A549 (cell line): ENCODE measurements at regions of chr17 and their contacts with region 1.

Region 1: DNA sequence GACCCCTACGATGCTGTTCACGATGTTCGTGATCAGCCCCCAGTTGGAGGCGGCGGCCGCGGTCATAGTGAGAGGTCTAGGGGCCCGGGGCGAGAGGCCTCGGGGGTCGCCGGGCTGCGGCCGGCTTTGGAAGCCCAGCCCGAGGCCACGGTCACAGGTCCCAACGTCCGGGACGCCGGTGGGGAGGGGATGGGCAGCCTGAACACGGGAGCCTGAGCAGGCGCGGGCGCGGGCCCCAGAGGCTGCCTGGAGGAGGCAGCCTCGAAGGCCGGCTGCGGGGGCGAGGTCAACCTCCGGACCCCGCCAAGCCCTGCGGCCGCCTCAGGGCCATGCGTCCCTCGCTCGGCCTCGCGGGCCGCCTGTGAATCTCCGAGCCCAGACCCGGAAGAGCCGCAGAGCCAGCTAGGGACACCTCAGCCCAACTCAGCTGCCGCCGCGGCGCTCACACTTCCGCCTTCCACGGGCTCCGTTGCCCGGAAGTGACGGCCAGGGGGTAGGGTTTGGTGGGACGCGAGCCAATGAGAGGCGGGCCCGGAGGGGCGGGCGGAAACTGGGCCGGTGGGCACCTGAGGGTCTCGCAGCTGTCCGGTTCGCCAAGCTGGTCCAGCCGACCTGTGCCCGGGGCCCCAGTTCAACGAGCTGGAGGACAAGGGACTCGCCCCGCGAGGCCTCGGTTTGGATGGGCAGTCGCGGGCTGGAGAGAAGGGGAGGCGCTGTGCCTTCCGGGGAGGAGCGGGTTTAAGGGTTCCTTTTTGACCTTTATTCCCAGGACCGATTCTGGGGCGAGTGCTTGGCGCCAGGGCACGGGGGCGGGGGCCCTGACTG is at the start of gene SLC38A10:
- DNase-seq: peak; percentile 87 to 100
- ATAC-seq: peak; percentile 94 to 95
- H3K4me3 ChIP-seq: peak within 1 kb of the TSS; percentile 74
- H3K27ac ChIP-seq: peak within 1 kb of the TSS; percentile 91 to 92
- H3K4me1 ChIP-seq: peaks cover 22% of the 10 kb centered on the region
- CTCF ChIP-seq: no peak; the same call in 2 of the 3 replicates
- EP300 ChIP-seq: no peak
- POLR2A ChIP-seq: peak; percentile 95
- RAD21 ChIP-seq: peak in 1 of 2 experiments; percentile 24; a peak in 1 of 5 replicates
- polyA plus RNA-seq, gene SLC38A10: 35.8 and 49.3 TPM in 2 replicates

Region 2: DNA sequence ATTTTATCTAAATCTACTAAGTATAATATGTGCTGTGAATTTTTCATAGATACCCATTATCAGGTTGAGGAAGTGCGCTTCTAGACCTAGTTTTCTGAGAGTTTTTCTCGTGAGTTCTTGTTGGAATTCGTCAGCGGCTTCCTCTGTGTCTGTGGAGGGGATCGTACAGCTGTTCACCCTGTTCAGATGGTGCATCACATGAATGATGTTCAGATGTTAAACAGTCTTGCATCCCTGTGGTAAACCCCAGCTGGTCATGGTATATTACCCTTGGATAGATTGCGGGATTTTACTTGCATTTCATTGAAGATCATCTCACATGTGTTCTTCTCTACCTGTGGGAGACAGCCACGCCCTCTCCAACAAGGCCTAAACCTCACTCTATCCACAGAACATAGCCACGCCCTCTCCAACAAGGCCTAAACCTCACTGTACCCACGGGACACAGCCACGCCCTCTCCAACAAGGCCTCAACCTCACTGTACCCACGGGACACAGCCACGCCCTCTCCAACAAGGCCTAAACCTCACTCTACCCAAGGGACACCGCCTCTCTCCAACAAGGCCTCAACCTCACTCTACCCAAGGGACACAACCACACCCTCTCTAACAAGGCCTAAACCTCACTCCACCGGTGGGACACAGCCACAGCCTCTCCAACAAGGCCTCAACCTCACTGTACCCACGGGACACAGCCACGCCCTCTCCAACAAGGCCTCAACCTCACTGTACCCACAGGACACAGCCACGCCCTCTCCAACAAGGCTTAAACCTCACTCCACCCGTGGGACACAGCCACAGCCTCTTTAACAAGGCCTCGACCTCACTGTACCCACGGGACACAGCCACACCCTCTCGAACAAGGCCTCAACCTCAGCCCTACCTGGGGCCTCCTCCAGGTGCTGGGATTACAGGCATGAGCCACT is 483.6 kb before region 1 on chr17:
- CTCF ChIA-PET with region 1: no interaction called
- POLR2A ChIA-PET with region 1: no interaction called
- DNase-seq: no peak
- ATAC-seq: no peak
- H3K4me3 ChIP-seq: no peak overlapping the region
- H3K27ac ChIP-seq: no peak overlapping the region
- H3K4me1 ChIP-seq: no peaks in the 10 kb centered on the region
- CTCF ChIP-seq: no peak
- EP300 ChIP-seq: no peak
- POLR2A ChIP-seq: no peak
- RAD21 ChIP-seq: no peak

Region 3: DNA sequence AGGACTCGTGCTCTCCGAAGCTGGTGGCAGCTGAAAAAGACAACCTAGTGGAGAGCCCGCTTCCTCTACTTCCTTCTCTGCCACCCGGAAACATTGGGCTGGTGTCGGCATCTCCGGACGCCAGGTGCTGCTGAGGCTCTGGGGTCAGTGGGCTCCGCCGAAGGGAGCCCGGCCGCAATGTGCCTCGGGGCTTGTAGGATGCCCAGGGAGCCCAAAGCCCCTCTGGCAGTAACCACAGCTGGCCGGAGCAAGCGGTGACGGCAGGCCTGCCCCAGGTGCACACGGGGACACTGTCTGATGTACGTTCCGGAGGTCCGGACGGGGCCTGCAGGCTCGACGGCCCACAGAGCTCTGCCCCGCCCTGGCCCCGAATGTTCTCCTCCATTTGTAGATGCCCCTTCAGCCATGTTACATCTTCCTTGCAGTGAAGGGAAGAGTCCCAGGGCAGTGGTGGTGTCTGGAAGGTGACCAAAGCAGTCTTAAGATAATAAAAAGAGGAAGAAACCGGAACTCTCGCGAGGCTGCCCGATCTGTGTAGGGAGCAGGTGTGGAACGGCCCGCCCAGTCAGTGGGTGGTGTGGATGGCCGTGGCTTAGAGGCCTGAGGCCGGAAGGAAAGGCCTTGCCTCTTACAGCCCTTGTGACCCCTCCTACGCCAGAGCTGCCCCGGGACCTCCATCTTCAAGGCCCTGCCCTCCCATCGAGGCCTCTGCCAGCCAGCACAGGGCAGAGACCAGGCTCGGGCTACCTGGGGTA is 33.3 kb before region 1 on chr17:
- CTCF ChIA-PET with region 1: interaction called, 18 read pairs
- POLR2A ChIA-PET with region 1: no interaction called
- DNase-seq: no peak
- ATAC-seq: no peak
- H3K4me3 ChIP-seq: no peak overlapping the region
- H3K27ac ChIP-seq: no peak overlapping the region
- H3K4me1 ChIP-seq: peaks cover 5% of the 10 kb centered on the region; the same call in 2 of the 3 replicates
- CTCF ChIP-seq: no peak
- EP300 ChIP-seq: no peak
- POLR2A ChIP-seq: no peak
- RAD21 ChIP-seq: no peak

Region 4: GRCh38 chr17:81309070-81309905 is 14.2 kb after region 1 on chr17:
- CTCF ChIA-PET with region 1: interaction called, 84 read pairs
- POLR2A ChIA-PET with region 1: interaction called, 9 read pairs
- DNase-seq: peak; percentile 90 to 99
- ATAC-seq: peak; percentile 74 to 88
- H3K4me3 ChIP-seq: peak overlapping the region; percentile 48
- H3K27ac ChIP-seq: peak overlapping the region; percentile 82 to 91
- H3K4me1 ChIP-seq: peaks cover 35% of the 10 kb centered on the region
- CTCF ChIP-seq: peak; percentile 50
- EP300 ChIP-seq: no peak
- POLR2A ChIP-seq: peak; percentile 50
- RAD21 ChIP-seq: peak; percentile 52 to 69

Region 5: DNA sequence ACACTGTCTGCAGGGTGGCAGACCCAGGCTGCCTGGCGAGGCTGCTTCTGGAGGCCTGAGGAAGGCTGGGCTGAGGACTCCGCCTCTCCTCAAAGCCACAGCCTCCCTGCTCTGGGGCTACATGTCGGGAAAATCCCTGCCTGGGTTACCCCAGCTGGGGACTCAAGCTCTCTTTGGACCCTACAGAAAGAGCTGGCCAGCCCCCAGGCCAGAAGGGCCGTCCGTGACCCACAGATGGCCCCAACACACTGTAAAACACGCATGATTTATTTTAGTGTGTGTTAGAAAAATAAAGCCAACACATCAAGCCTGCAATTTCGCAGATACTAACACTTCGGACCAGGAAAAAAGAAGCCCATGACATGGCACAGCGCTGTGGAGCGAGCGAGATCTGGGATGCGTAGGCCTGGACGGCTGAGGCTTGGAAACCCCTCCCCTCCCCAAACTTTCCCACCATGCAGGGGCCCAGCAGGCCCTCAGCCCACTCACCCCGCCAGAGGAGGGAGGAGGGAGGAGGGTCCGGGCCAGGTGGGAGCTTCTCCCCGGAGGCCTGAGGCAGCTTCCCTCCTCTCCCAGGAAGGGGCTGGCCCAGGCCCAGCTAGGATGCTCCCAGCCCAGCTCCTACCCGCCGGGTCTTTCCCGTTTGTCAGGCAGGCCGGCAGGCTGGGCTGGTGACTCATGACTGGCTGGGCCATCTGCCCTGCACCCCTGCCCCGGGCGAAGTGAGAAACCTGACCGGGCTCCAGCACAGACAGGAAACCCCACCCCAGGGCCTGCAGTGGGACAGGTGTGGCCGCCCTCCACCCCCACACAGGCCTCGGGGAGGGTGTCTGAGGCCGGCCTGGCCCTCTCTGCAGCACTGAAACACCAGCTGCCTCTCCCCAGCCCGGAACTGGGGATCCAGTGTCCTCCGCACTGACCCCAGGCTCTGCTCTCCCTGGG is 34.2 kb after region 1 on chr17:
- CTCF ChIA-PET with region 1: interaction called, 20 read pairs
- POLR2A ChIA-PET with region 1: interaction called, 7 read pairs
- DNase-seq: peak; percentile 93 to 99
- ATAC-seq: peak; percentile 80 to 90
- H3K4me3 ChIP-seq: peak overlapping the region; percentile 30
- H3K27ac ChIP-seq: peak overlapping the region; percentile 93 to 94
- H3K4me1 ChIP-seq: peaks cover 39% of the 10 kb centered on the region
- CTCF ChIP-seq: no peak
- EP300 ChIP-seq: peak; percentile 19 to 41; a peak in 1 of 5 replicates
- POLR2A ChIP-seq: peak; percentile 25
- RAD21 ChIP-seq: peak; percentile 24 to 40; a peak in 2 of 5 replicates

Region 6: GRCh38 chr17:81385320-81386111 is 90.4 kb after region 1 on chr17:
- CTCF ChIA-PET with region 1: interaction called, 15 read pairs
- POLR2A ChIA-PET with region 1: no interaction called
- DNase-seq: no peak
- ATAC-seq: no peak
- H3K4me3 ChIP-seq: no peak overlapping the region
- H3K27ac ChIP-seq: no peak overlapping the region
- H3K4me1 ChIP-seq: peaks cover 13% of the 10 kb centered on the region; the same call in 2 of the 3 replicates
- CTCF ChIP-seq: no peak
- EP300 ChIP-seq: no peak
- POLR2A ChIP-seq: no peak
- RAD21 ChIP-seq: no peak

Region 7: GRCh38 chr17:81401723-81402529 is 106.9 kb after region 1 on chr17:
- CTCF ChIA-PET with region 1: interaction called, 21 read pairs
- POLR2A ChIA-PET with region 1: no interaction called
- DNase-seq: peak; percentile 69 to 81
- ATAC-seq: peak in 1 of 2 experiments; percentile 54; a peak in 3 of 6 replicates
- H3K4me3 ChIP-seq: no peak overlapping the region
- H3K27ac ChIP-seq: peak overlapping the region; percentile 16 to 98; a peak in 3 of 6 replicates
- H3K4me1 ChIP-seq: peaks cover 49% of the 10 kb centered on the region
- CTCF ChIP-seq: peak; percentile 55
- EP300 ChIP-seq: no peak
- POLR2A ChIP-seq: no peak
- RAD21 ChIP-seq: peak; percentile 64 to 67